Heart right ventricle (tissue), 16 donors: ENCODE measurements at regions of chr4 and their contacts with region 1.

Region 1: GRCh38 chr4:41432881-41433280 is 105.1 kb upstream of the LIMCH1 start:
- DNase-seq: no peak
- ATAC-seq: no peak
- H3K4me3 ChIP-seq: no peak overlapping the region
- H3K27ac ChIP-seq: peak overlapping the region in 5 of 10 donors; percentile 26 to 89 (median 69)
- H3K4me1 ChIP-seq: peaks cover 8 to 95% (median 78%) of the 10 kb centered on the region in 9 donors
- H3K27me3 ChIP-seq: no peaks in the 10 kb centered on the region
- CTCF ChIP-seq: no peak

Region 2: GRCh38 chr4:41294445-41295062 is 138.3 kb before region 1 on chr4:
- intact Hi-C with region 1: loop called in 2 of 10 experiments (anchors 10 kb)
- DNase-seq: no peak
- ATAC-seq: no peak
- H3K4me3 ChIP-seq: no peak overlapping the region
- H3K27ac ChIP-seq: no peak overlapping the region
- H3K4me1 ChIP-seq: peaks cover 0 to 29% (median 0%) of the 10 kb centered on the region in 9 donors
- H3K27me3 ChIP-seq: no peaks in the 10 kb centered on the region
- CTCF ChIP-seq: no peak